Caco-2 (cell line): ENCODE measurements at regions of chr20 and their contacts with region 1.

Region 1: DNA sequence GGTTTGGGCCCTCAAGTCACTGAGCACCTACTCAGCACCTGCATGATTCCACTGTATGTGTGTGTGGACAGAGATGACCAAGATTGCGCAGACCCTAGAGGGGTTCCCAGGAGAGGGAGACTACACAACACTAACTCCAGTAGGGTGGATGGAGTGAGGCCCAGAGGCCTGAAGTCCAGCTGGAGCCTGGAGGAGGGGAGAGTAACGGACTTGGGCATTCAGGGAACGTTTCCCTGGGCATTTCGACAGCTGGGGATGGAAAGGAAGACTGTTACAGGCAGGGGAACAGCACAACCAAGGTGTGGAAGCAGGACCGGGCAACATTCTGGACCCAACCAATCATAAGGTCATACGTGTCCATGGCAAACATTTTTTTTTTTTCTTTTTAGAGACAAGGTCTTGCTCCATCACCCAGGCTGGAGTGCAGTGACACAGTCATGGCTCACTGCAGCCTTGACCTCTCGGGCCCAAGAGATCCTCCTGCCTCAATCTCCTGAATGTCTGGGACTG is 11.1 kb upstream of the CEBPB start:
- DNase-seq: no peak
- H3K4me3 ChIP-seq: no peak overlapping the region
- H3K4me3 Mint-ChIP-seq: no peak overlapping the region
- H3K27ac Mint-ChIP-seq: peak overlapping the region; percentile 14
- H3K4me1 ChIP-seq: no peaks in the 10 kb centered on the region
- H3K4me1 Mint-ChIP-seq: peaks cover 7% of the 10 kb centered on the region
- H3K27me3 ChIP-seq: no peaks in the 10 kb centered on the region
- H3K27me3 Mint-ChIP-seq: no peaks in the 10 kb centered on the region
- CTCF ChIP-seq: peak in 1 of 2 experiments; percentile 50

Region 2: DNA sequence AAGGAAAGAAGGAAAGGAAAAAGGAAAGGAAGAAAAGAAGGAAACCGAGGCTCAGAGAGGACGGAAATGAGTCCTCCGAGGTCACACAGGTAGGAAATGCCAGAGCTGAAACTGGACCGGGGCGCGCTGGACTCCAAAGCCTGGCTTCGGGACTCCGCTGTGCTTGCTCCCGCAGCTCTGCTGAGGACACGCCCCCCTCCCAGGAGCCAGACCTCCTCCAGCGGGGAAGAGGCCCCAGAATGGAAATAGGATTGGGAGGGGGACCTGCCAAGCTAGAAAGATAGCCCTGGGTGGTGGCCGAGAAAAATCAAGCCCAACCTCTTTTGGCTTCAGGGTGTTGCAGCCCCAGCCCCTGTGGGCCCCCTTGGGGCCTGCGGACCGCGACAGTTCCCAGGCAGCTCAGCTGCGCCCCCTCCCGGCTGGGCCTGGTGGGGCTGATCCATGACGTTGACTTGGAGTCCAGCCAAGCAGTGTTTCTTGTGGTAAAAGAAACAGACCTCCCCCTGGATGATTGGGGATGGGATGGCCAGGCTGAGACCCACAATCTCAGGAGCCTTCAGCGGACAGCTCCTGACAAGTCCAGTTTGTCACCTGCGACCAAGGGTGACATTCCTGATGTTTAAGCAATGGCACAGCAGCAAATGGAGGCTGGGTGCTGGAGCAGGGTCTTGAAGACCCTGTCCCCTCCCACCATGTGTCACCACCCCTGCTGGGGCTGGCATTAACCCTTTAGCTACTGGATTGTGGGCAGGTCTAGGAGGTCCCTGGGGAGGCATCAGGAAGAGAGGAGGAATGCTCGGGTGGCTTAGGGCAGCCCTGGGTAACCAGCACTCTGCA is 456.3 kb after region 1 on chr20:
- CTCF ChIA-PET with region 1: interaction called, 10 read pairs
- POLR2A ChIA-PET with region 1: no interaction called
- intact Hi-C with region 1: no loop called
- DNase-seq: peak; percentile 92 to 94
- H3K4me3 ChIP-seq: no peak overlapping the region
- H3K4me3 Mint-ChIP-seq: peak overlapping the region; percentile 50
- H3K27ac Mint-ChIP-seq: peak overlapping the region; percentile 53
- H3K4me1 ChIP-seq: peaks cover 21% of the 10 kb centered on the region
- H3K4me1 Mint-ChIP-seq: peaks cover 17% of the 10 kb centered on the region
- H3K27me3 ChIP-seq: no peaks in the 10 kb centered on the region
- H3K27me3 Mint-ChIP-seq: no peaks in the 10 kb centered on the region
- CTCF ChIP-seq: peak; percentile 99

Region 3: GRCh38 chr20:51494241-51495120 is 1314.9 kb after region 1 on chr20:
- CTCF ChIA-PET with region 1: interaction called, 11 read pairs
- POLR2A ChIA-PET with region 1: no interaction called
- intact Hi-C with region 1: no loop called
- DNase-seq: no peak
- H3K4me3 ChIP-seq: no peak overlapping the region
- H3K4me3 Mint-ChIP-seq: no peak overlapping the region
- H3K27ac Mint-ChIP-seq: no peak overlapping the region
- H3K4me1 ChIP-seq: peaks cover 14% of the 10 kb centered on the region
- H3K4me1 Mint-ChIP-seq: peaks cover 19% of the 10 kb centered on the region
- H3K27me3 ChIP-seq: no peaks in the 10 kb centered on the region
- H3K27me3 Mint-ChIP-seq: no peaks in the 10 kb centered on the region
- CTCF ChIP-seq: no peak

Region 4: GRCh38 chr20:51579137-51579536 is 1399.6 kb after region 1 on chr20:
- CTCF ChIA-PET with region 1: no interaction called
- POLR2A ChIA-PET with region 1: no interaction called
- intact Hi-C with region 1: no loop called
- DNase-seq: no peak
- H3K4me3 ChIP-seq: no peak overlapping the region
- H3K4me3 Mint-ChIP-seq: no peak overlapping the region
- H3K27ac Mint-ChIP-seq: no peak overlapping the region
- H3K4me1 ChIP-seq: no peaks in the 10 kb centered on the region
- H3K4me1 Mint-ChIP-seq: peaks cover 7% of the 10 kb centered on the region
- H3K27me3 ChIP-seq: no peaks in the 10 kb centered on the region
- H3K27me3 Mint-ChIP-seq: no peaks in the 10 kb centered on the region
- CTCF ChIP-seq: no peak